CD4-positive, alpha-beta memory T cell (primary cell): ENCODE measurements at regions of chr18 and their contacts with region 1.

Region 1: GRCh38 chr18:74551936-74552555 is 17.7 kb downstream of the CNDP1 start:
- DNase-seq: peak; percentile 62 to 73 (median 67)
- H3K4me3 ChIP-seq: no peak overlapping the region
- H3K4me3 Mint-ChIP-seq: no peak overlapping the region
- H3K27ac ChIP-seq: no peak overlapping the region
- H3K27ac Mint-ChIP-seq: no peak overlapping the region
- H3K4me1 ChIP-seq: no peaks in the 10 kb centered on the region
- H3K4me1 Mint-ChIP-seq: no peaks in the 10 kb centered on the region
- H3K27me3 ChIP-seq: no peaks in the 10 kb centered on the region
- H3K27me3 Mint-ChIP-seq: peaks cover 8 to 16% of the 10 kb centered on the region in 2 donors

Region 2: DNA sequence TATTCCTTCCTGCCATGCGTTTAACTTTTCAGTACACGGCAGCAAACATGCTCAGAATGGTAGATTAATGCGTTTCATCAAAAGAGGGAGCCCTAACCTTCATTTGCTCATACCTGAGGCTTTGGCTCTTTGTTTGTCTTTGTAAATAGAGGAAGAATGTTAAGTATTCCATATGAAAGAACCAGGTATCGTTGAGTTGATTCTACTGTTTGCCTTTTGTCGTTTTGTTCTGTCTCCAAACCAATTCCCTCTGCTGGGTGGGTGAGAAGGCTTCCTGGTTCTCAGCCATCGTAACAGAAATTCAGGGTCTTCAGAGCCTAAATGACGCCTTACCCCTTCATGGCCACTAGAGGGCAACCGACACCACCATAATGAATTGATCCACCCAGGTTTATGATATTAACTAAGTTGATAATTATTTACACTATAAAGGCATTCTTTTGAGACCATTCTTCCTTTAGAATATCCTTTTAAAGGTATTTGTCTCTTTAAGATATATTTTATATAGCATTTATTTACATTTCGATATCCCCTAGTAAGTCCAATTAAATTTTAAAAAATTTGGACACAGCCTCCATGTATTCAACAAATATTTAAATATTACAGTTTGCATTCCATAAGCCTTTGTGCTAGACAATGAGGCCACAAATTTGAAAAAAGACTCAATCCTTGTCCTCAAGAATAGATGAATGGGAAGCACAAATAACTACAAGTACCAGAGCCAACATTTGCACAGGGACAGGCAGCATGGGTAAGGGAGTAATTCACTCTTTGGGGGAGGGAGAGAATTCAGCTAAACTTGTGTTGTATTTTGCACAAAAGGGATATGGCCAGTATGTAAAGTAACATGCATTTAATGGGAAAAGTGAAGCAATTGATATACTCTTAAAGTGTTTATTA is 355.6 kb before region 1 on chr18:
- CTCF ChIA-PET with region 1: interaction called, 63 read pairs
- POLR2A ChIA-PET with region 1: no interaction called
- intact Hi-C with region 1: loop called (anchors 1 kb)
- DNase-seq: peak; percentile 57 to 78 (median 72)
- H3K4me3 ChIP-seq: no peak overlapping the region
- H3K4me3 Mint-ChIP-seq: peak overlapping the region; percentile 71 to 90 (median 81)
- H3K27ac ChIP-seq: no peak overlapping the region
- H3K27ac Mint-ChIP-seq: peak overlapping the region in 6 of 7 donors; percentile 23 to 79 (median 65)
- H3K4me1 ChIP-seq: peaks cover 5% of the 10 kb centered on the region
- H3K4me1 Mint-ChIP-seq: peaks cover 0 to 4% (median 0%) of the 10 kb centered on the region in 4 donors
- H3K27me3 ChIP-seq: no peaks in the 10 kb centered on the region
- H3K27me3 Mint-ChIP-seq: peaks cover 2 to 14% of the 10 kb centered on the region in 2 donors

Region 3: DNA sequence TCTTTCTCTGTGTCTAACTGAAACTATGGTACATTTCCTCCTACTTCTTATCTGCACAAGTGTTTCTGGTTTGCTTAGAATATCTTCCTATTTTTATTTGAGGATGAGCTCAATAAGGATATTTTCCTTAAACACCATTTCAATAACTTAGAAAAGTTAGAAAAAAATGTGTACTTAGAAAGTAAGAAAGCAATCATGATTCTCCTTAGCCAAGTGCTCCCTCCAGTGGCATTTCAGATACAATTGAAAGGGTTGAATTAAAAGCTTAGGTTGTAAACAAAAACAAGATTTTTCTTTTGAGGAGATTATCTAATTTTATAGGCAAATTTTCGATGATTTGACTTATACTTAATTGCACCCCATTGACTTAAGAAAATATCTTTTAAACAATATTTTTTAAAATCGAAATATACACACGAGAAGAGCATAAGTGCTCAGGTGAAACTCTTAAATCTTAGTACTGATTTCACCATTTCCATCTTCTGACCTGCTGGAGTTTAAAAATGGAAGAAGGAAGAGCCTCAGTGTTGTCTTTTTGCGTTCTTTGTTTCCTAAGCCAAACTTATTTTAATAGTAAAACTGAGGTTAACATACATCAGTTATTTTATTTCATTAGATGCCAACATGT is 209.5 kb before region 1 on chr18:
- CTCF ChIA-PET with region 1: interaction called, 10 read pairs
- POLR2A ChIA-PET with region 1: no interaction called
- intact Hi-C with region 1: loop called (anchors 1 kb)
- DNase-seq: peak; percentile 25 to 47 (median 42)
- H3K4me3 ChIP-seq: no peak overlapping the region
- H3K4me3 Mint-ChIP-seq: no peak overlapping the region
- H3K27ac ChIP-seq: no peak overlapping the region
- H3K27ac Mint-ChIP-seq: no peak overlapping the region
- H3K4me1 ChIP-seq: no peaks in the 10 kb centered on the region
- H3K4me1 Mint-ChIP-seq: no peaks in the 10 kb centered on the region
- H3K27me3 ChIP-seq: no peaks in the 10 kb centered on the region
- H3K27me3 Mint-ChIP-seq: peaks cover 3 to 4% of the 10 kb centered on the region in 2 donors

Region 4: DNA sequence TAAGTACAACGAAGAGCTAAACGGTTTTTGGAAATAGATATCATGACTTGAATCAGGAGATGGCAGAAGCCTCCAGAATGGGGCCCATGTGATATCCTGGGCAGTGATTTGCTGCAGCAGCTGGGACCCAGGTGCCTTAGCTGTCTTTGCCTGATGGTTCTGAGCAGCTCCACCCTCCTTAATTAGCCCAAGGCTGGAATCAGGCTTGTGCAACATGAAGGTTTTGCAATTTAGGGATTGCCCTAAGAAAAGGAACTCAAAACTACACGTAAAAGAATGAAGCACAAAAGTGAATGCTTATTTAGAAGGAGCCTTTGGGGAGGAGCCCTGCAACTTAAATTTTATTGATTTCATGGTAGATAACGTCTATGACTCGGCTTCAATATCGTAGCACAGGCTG is 73.2 kb before region 1 on chr18:
- CTCF ChIA-PET with region 1: no interaction called
- POLR2A ChIA-PET with region 1: no interaction called
- intact Hi-C with region 1: no loop called
- DNase-seq: no peak
- H3K4me3 ChIP-seq: no peak overlapping the region
- H3K4me3 Mint-ChIP-seq: no peak overlapping the region
- H3K27ac ChIP-seq: no peak overlapping the region
- H3K27ac Mint-ChIP-seq: no peak overlapping the region
- H3K4me1 ChIP-seq: no peaks in the 10 kb centered on the region
- H3K4me1 Mint-ChIP-seq: no peaks in the 10 kb centered on the region
- H3K27me3 ChIP-seq: no peaks in the 10 kb centered on the region
- H3K27me3 Mint-ChIP-seq: peaks cover 0 to 19% of the 10 kb centered on the region in 2 donors

Region 5: DNA sequence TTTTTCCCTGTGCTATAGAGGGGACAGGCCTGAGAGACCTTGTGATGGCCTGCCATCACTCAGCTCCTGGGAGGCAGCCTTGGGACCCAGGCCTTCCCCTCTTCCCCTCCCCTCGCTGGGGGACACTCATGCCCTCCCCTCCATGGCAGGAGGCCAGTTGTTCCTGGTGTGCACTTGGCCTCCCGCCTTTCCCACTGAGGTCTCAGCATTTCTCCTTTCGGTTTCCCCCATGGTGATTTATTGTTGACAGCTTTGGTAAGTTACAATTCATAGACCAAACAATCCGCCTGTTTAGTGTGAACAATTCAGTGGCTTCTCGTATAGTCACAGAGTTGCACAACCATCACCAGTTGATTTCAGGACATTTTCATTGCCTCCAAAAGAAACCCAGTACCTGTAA is 27.9 kb before region 1 on chr18:
- CTCF ChIA-PET with region 1: interaction called, 12 read pairs
- POLR2A ChIA-PET with region 1: no interaction called
- intact Hi-C with region 1: no loop called
- DNase-seq: no peak
- H3K4me3 ChIP-seq: no peak overlapping the region
- H3K4me3 Mint-ChIP-seq: no peak overlapping the region
- H3K27ac ChIP-seq: no peak overlapping the region
- H3K27ac Mint-ChIP-seq: no peak overlapping the region
- H3K4me1 ChIP-seq: no peaks in the 10 kb centered on the region
- H3K4me1 Mint-ChIP-seq: no peaks in the 10 kb centered on the region
- H3K27me3 ChIP-seq: no peaks in the 10 kb centered on the region
- H3K27me3 Mint-ChIP-seq: no peaks in the 10 kb centered on the region

Region 6: DNA sequence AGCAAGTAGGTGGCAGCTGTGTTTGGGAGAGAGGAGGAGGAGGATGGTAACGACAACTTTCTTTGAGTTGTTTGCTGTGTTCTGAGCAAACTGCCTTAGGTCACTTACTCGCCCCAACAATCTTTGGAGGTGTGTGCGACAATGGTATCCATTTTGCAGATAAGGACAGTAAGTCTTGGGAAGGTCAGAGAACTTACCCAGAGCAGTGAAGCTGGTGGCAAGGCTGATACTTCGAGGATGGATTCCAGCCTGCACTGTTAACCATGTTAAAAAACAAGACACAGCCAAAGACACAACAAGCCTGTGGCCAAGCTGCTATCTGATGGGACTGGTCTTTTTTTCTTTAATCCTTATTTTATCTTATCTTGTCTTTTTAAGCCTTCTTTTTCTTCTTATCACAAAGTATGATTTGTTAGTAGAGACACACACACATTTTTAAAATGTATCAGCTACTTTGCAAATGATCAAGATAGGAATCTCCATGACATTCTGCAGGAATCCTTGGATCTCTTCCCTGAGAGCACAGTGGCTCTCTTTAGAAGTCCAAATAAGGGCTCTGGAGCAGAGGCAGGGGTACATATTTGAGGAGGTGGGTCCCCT is 10.2 kb after region 1 on chr18:
- CTCF ChIA-PET with region 1: interaction called, 13 read pairs
- POLR2A ChIA-PET with region 1: no interaction called
- intact Hi-C with region 1: no loop called
- DNase-seq: no peak
- H3K4me3 ChIP-seq: no peak overlapping the region
- H3K4me3 Mint-ChIP-seq: no peak overlapping the region
- H3K27ac ChIP-seq: no peak overlapping the region
- H3K27ac Mint-ChIP-seq: peak overlapping the region in 1 of 7 donors; percentile 36
- H3K4me1 ChIP-seq: no peaks in the 10 kb centered on the region
- H3K4me1 Mint-ChIP-seq: no peaks in the 10 kb centered on the region
- H3K27me3 ChIP-seq: no peaks in the 10 kb centered on the region
- H3K27me3 Mint-ChIP-seq: peaks cover 5 to 13% of the 10 kb centered on the region in 2 donors

Region 7: GRCh38 chr18:74616494-74616893 is 64.4 kb after region 1 on chr18:
- CTCF ChIA-PET with region 1: no interaction called
- POLR2A ChIA-PET with region 1: no interaction called
- intact Hi-C with region 1: no loop called
- DNase-seq: no peak
- H3K4me3 ChIP-seq: no peak overlapping the region
- H3K4me3 Mint-ChIP-seq: no peak overlapping the region
- H3K27ac ChIP-seq: no peak overlapping the region
- H3K27ac Mint-ChIP-seq: no peak overlapping the region
- H3K4me1 ChIP-seq: no peaks in the 10 kb centered on the region
- H3K4me1 Mint-ChIP-seq: peaks cover 7 to 21% (median 12%) of the 10 kb centered on the region in 4 donors
- H3K27me3 ChIP-seq: no peaks in the 10 kb centered on the region
- H3K27me3 Mint-ChIP-seq: no peaks in the 10 kb centered on the region